ENCODE measurements at regions of chr17 and their contacts with region 1.

Region 1: GRCh38 chr17:1648963-1649843 is 463 bp downstream of the RILP start:
- DNase-seq: peak in 1 of 2 donors; percentile 96
- H3K4me3 ChIP-seq: peak overlapping the region; percentile 66 to 72
- H3K27ac ChIP-seq: peak overlapping the region; percentile 95
- H3K4me1 ChIP-seq: peaks cover 44% of the 10 kb centered on the region
- H3K27me3 ChIP-seq: no peaks in the 10 kb centered on the region
- CTCF ChIP-seq: peak in 2 of 3 experiments; percentile 6 to 79
- POLR2A ChIP-seq: peak in 1 of 2 donors; percentile 64

Region 2: DNA sequence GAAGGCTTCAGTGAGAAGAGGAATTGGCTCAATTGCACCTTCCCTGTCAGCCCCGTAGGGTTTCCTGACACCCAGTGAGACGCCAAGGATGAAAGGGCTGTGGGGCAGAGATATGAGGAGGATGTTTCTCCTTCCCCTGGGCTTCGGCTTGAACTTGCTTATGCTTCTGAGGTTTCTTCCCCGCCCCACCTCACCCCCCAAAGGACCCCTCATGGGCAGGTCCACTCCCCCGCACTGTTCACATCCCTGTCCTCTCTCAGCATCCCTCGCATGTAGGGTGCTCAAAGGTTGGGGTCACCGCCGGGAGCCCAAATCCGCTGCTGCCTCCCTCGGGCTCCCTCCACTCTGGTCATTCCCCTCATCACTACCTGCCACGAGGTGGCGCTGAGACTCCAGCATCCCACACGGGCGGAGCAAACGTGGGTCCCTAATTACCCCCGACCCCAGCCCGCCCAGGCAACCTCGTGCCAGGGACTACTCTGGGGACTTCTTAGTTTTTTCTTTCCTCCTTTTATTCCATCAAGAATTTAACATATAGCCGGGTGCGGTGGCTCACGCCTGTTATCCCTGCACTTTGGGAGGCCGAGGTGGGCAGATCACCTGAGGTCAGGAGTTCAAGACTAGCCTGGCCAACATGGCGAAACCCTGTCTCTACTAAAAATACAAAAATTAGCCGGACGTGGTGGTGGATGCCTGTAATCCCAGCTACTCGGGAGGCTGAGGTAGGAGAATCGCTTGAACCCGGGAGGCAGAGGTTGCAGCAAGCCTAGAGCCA is 373.1 kb before region 1 on chr17:
- intact Hi-C with region 1: loop called (anchors 10 kb)
- DNase-seq: no peak
- H3K4me3 ChIP-seq: no peak overlapping the region
- H3K27ac ChIP-seq: no peak overlapping the region
- H3K4me1 ChIP-seq: no peaks in the 10 kb centered on the region
- H3K27me3 ChIP-seq: no peaks in the 10 kb centered on the region
- CTCF ChIP-seq: peak; percentile 32 to 65 (median 55)
- POLR2A ChIP-seq: no peak

Region 3: DNA sequence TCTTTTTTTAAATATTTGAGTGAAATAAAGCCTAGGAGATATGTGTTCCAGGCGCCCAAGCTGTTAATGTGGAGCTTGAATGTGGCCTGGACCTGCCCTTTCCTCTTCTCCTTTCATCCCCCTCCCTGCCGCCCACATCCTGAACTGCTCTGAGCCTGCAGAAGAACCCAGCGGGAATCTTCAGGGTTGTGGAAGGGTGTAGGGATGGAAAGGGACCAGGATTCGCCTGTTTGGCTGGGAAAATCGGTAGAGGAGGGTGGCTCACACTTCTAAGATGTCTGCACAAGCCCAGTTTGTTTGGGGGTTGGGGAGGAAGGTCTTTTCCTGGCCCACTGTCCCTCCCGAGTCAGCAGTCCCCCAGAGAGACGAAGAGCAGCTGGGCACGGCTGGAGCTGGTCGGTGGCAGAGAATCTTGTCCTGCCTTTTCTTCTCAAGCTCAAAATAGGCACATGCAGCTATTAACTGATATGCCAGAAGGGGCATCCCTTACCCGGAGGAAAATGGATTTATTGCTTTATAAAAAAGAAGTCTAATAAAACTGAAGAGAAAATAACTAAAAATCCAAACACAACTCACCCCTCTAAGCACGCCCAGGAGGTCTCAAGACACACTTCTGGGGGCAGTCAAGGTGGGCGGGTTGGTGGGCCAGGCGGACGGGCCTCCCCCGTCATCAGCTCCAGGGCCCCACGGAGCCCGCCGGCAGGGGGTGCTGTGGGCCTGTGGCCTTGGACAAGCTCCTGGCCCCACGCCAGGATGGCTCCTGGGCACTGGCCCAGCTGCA is 75.1 kb before region 1 on chr17:
- intact Hi-C with region 1: loop called (anchors 2 kb)
- DNase-seq: no peak
- H3K4me3 ChIP-seq: no peak overlapping the region
- H3K27ac ChIP-seq: peak overlapping the region; percentile 80
- H3K4me1 ChIP-seq: peaks cover 28% of the 10 kb centered on the region
- H3K27me3 ChIP-seq: no peaks in the 10 kb centered on the region
- CTCF ChIP-seq: peak; percentile 89 to 97 (median 91)
- POLR2A ChIP-seq: no peak

Region 4: GRCh38 chr17:2337544-2338320 is 688.5 kb after region 1 on chr17:
- intact Hi-C with region 1: no loop called
- DNase-seq: no peak
- H3K4me3 ChIP-seq: peak overlapping the region; percentile 73 to 76
- H3K27ac ChIP-seq: peak overlapping the region; percentile 94
- H3K4me1 ChIP-seq: peaks cover 28% of the 10 kb centered on the region
- H3K27me3 ChIP-seq: no peaks in the 10 kb centered on the region
- CTCF ChIP-seq: no peak
- POLR2A ChIP-seq: peak in 1 of 2 donors; percentile 10

Measured in vagina (tissue), 2 donors.